Right ventricle myocardium inferior (tissue), 1 donor: ENCODE measurements at regions of chr9 and their contacts with region 1.

Region 1: GRCh38 chr9:105414947-105415661 is 32.7 kb upstream of the FSD1L start:
- DNase-seq: no peak
- ATAC-seq: no peak

Region 2: GRCh38 chr9:104808035-104808614 is 607.0 kb before region 1 on chr9:
- intact Hi-C with region 1: loop called (anchors 10 kb)
- DNase-seq: no peak
- ATAC-seq: peak; percentile 34

Region 3: GRCh38 chr9:104863180-104863883 is 551.8 kb before region 1 on chr9:
- intact Hi-C with region 1: loop called (anchors 2 kb)
- DNase-seq: no peak
- ATAC-seq: peak; percentile 73

Region 4: DNA sequence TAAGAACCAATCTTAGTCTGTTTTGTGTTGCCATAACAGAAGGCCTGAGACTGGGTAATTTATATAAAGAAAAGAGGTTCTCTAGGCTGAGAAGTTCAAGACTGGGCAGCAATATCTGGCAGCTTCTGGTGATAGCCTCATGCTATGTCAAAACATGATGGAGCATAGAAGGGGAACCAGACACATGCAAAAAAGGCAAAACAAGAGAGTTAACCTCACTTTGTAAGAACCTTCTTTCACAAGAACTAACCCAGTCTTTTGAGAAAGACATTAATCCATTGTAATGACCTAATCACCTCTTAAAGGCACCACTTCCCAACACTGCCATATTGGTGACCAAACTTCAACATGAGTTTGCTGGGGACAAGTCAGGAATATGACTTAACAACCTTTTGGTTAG is 70.0 kb after region 1 on chr9:
- intact Hi-C with region 1: no loop called
- DNase-seq: no peak
- ATAC-seq: no peak